ENCODE measurements at regions of chr13 and their contacts with region 1.

Region 1: DNA sequence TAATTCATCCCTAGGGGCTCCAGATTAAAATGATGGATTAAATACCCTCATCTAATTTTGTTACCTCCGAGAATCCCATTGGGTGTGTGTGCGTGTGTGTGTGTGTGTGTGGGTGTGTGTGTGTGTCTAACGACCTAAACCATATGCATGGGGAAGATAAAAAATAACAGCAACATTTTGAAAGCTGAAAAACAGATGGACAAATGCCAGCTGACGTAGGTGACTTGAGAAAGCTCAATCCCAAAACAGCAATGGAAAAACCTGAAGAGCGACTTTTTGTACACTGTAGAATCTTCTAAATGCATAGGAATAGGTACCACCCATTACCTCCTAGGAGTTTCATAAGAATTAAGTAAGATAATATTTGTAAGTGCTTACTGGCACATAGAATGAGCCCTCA is 8.7 kb upstream of the RPL21 start:
- DNase-seq: no peak
- H3K4me3 ChIP-seq: no peak overlapping the region
- H3K27ac ChIP-seq: no peak overlapping the region
- H3K4me1 ChIP-seq: no peaks in the 10 kb centered on the region
- H3K27me3 ChIP-seq: no peaks in the 10 kb centered on the region
- CTCF ChIP-seq: no peak
- POLR2A ChIP-seq: no peak

Region 2: DNA sequence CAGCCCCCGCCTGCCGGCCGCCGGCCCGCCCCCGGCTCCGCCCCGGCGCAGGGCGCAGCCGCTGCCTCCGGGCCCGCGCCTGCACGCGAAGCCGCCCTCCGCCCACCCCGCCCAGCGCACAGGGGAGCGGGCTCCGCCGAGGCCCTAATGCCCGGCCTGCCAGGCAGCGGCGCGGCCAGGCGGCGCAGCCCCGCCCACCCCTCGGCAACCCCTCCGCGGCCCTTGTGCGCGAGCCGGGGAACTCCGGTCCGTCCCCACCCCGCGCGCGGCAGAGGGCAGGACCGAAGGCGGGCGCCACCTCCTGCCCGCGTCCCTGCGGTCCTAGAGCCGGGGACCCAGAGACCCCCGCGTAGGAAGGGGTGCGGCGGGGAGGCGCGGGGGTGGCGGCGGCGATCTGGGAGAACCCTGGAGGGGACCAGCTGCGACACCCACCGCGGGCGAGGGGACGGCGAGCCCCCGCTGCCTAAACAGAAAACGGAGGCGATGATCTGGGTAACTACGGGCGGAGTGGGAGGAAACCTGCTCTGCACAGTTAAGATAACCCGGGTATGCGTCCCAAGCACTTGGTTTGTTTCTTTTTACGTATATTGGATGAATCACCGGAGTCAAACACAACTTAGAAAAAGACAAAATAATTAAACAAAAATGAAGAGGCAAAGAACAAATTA is 70.7 kb before region 1 on chr13:
- intact Hi-C with region 1: loop called in 1 of 2 experiments (anchors 10 kb)
- DNase-seq: peak; percentile 89 to 95 (median 92)
- H3K4me3 ChIP-seq: peak overlapping the region; percentile 33 to 100 (median 80)
- H3K27ac ChIP-seq: peak overlapping the region; percentile 72 to 96 (median 90)
- H3K4me1 ChIP-seq: peaks cover 0 to 31% of the 10 kb centered on the region in 2 donors
- H3K27me3 ChIP-seq: no peaks in the 10 kb centered on the region
- CTCF ChIP-seq: peak in 2 of 6 experiments; percentile 5 to 14
- POLR2A ChIP-seq: peak in 1 of 2 donors; percentile 51

Measured in adrenal gland (tissue), 19 donors.